ENCODE measurements at regions of chr6 and their contacts with region 1.

Region 1: GRCh38 chr6:31639449-31639861 is 13.0 kb downstream of the BAG6 start:
- DNase-seq: peak; percentile 7
- H3K4me3 ChIP-seq: no peak overlapping the region
- CTCF ChIP-seq: no peak

Region 2: DNA sequence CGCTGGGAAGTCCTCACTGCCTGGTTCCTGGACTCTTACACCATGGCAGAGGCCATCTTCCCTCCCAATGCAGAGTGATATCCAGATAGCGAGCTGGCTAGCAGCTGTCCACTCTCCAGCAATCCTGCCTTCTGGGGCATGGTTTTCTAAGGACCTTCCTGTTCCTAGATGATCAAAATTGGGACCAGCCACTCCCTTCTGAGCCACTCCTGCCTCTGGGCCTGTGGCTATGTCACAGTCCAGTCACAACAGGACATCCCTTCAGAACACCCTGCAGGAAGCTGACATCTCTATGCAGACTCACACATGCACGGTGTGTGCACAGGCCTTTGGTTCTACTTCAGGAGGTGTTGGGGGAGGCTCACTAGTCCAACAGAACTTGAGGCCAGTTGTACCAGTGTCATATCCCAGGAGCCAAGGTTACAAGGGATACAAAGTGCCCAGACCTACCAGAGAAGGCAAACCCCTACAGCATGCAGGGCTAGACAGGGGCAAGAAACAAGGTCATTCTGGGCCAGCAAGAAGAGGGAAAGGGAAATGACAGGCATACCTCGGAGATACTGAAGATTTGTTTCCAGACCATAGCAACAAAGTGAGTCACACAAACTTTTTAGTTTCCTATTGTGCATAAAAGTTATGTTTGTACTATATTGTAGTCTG is 113.4 kb before region 1 on chr6:
- CTCF ChIA-PET with region 1: no interaction called
- POLR2A ChIA-PET with region 1: no interaction called
- DNase-seq: no peak
- H3K4me3 ChIP-seq: no peak overlapping the region
- CTCF ChIP-seq: no peak

Region 3: DNA sequence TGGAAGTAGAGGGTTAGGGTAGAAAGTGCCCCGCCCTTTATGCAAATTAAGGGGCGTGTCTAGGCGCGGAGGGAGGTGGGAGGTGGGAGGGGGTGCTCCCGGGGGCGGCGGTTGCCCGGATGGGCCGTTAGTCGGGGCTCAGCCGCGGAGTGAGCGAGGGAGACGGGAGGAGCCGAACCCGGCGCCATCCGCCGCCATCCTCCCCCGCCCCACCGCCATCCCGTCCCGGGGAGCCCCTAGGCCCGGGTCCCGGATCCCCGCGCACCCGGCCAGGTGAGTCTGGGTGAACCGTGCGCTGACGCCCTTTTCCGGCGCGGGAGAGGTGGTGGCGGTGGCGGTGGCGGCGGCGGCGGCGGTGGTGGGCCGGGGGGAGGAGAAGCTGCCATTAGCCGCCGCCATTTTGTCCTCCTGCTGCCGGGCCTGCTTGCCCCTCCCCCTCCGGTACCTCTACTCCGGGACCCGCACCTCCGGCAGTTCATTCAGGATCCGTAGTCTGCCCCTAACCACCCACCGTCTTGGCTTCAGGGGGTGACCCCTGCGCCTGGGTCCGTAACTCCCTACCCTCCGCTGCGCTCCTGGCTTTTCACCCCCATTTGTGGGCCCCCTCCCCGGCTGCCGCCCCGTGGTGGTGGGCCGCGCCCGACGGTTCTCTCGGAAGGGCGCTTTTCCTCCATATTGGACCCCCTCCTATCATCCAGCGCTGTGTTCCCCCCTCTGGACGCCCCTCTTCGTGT is 18.7 kb before region 1 on chr6 and contains the start of gene PRRC2A:
- CTCF ChIA-PET with region 1: interaction called, 11 read pairs
- POLR2A ChIA-PET with region 1: interaction called, 16 read pairs
- DNase-seq: no peak
- H3K4me3 ChIP-seq: peak within 1 kb of the TSS; percentile 97
- CTCF ChIP-seq: no peak

Region 4: DNA sequence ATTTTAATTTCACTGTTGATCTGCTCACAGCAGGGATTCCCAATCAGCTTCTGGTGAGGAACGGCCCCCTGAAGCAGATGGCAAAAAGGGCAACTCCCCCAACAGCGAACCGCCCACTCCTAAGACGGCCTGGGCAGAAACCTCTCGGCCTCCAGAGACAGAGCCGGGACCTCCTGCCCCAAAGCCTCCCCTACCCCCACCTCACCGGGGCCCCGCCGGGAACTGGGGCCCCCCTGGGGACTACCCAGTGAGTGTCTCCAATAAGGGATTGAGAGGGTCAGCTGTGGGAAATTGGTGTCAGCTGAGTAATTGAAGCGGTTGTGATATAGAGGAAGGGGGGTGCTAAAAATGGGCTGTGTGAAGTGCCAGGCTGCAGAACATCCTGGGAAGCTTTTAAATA is 12.5 kb before region 1 on chr6:
- CTCF ChIA-PET with region 1: interaction called, 11 read pairs
- POLR2A ChIA-PET with region 1: interaction called, 16 read pairs
- DNase-seq: no peak
- H3K4me3 ChIP-seq: no peak overlapping the region
- CTCF ChIP-seq: no peak

Region 5: DNA sequence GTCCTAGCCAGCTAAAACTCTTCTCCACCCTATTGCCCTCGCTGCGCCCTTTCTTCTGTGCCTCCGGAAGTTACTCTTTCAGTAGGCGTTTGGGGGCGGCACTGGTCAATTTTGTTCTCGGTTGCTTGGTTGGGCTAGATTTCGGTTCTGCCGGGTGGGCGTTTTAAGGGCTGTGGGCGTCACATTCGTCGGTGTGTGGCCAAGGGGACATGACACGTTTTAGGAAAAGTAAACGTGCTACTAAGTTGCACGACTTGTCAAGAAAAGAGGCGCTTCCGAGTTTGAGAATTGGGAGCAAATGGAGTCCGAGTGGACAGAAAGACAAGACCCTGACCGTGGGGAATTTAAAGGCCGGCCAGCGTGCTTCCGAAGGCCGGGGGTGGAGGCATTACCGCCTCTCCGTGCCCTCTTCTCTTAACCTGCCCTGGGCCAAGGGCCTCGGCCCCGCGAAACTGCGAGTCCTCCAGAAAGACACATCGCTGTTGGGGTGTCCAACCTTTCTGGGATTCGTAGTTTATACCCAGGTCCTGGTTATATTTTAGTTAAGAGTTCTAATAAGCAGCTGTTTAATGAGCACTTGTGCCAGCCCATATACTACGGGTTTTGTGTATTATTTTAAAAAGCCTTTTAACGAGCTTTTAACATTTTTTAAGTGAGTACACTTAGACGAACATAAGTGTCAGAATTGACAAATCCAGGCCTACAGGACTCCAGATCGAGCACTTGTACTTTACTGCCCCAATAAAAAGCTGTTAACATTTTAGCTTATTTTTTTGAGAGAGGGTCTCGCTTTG is 13.7 kb after region 1 on chr6:
- CTCF ChIA-PET with region 1: interaction called, 5 read pairs
- POLR2A ChIA-PET with region 1: interaction called, 14 read pairs
- DNase-seq: no peak
- H3K4me3 ChIP-seq: peak overlapping the region; percentile 91
- CTCF ChIP-seq: no peak